Heart left ventricle (tissue), 16 donors: ENCODE measurements at regions of chr21 and their contacts with region 1.

Region 1: GRCh38 chr21:37009740-37010341 is 3.3 kb downstream of the RIPPLY3 start:
- DNase-seq: peak; percentile 77 to 92 (median 80)
- ATAC-seq: peak; percentile 85 to 99 (median 95)
- H3K4me3 ChIP-seq: peak overlapping the region in 7 of 12 donors; percentile 13 to 46 (median 21)
- H3K27ac ChIP-seq: no peak overlapping the region
- H3K4me1 ChIP-seq: peaks cover 0 to 19% (median 10%) of the 10 kb centered on the region in 12 donors
- H3K27me3 ChIP-seq: peaks cover 14 to 90% (median 44%) of the 10 kb centered on the region in 9 donors
- CTCF ChIP-seq: peak; percentile 67 to 89 (median 82)
- POLR2A ChIP-seq: no peak

Region 2: DNA sequence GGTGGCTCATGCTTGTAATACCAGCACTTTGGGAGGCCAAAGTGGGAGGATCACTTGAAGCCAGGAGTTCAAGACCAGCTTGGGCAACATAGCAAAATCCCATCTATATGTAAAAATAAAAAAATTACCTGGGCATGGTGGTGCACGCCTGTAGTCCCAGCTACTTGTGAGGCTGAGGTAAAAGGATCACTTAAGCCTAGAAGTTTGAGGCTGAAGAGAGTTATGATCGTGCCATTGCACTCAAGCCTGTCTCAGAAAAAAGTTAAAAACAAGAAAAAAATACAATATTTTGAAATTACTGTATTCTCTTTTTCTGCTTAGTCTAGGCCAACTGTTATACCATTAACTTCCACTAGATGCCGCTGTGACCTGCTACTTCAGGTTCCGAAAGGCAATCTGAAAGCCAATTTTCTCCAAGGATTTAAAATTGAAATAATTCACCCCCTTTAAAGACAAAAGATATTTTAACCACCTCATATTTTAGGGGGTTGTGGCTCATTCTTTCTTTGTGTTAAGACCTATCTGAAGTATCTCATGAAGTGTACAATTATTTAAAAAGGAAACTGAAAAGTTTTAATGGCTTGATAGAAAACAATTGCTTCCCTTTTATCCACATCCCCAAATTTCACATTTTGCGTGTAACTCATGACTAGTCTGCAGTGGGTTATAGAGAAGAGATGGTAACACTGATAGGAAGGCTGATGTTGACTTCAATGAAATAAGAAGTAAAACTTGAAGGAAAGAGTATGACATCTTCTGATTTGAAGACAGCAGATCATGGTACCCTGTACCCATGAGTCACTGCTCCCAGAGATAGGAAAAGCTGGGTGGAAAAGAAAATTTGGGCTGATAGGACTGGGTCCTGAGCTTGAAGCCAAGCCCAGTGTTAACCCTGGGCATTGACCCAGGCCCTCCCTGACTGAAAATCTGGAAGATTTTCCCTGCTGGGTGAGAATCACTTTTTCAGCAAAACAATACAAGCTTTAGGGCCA is 505.5 kb before region 1 on chr21:
- intact Hi-C with region 1: loop called in 1 of 10 experiments (anchors 10 kb)
- DNase-seq: peak in 1 of 5 donors; percentile 21
- ATAC-seq: no peak
- H3K4me3 ChIP-seq: no peak overlapping the region
- H3K27ac ChIP-seq: no peak overlapping the region
- H3K4me1 ChIP-seq: peaks cover 0 to 8% (median 0%) of the 10 kb centered on the region in 12 donors
- H3K27me3 ChIP-seq: peaks cover 0 to 8% (median 0%) of the 10 kb centered on the region in 9 donors
- CTCF ChIP-seq: peak; percentile 90 to 97 (median 92)
- POLR2A ChIP-seq: no peak

Region 3: DNA sequence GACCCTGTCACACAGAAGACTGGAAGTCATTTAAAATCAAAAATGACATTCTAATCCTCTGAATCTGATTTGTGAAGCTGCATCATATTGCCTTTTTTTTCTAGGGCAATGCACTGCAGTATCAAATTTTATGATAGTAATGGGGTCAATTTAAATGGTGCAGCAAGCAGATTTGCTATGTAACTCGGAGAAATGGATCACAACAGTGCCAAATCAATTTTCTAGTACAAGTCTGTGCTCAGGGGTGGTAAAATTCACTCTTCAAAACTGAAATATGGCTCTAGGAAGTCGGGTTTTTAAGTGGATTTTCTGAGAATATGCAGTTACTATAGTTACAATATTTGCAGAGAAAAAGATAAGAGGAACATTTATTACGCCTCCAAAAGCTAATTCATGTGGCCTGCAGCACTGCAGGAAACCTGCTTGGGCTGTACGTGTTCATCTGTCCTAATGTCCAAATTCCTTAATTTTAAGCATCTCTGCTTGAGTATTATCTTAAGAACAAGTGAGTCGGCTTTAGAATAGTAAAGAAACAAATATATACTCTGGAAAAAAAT is 74.9 kb before region 1 on chr21:
- intact Hi-C with region 1: loop called in 1 of 10 experiments (anchors 5 kb)
- DNase-seq: no peak
- ATAC-seq: no peak
- H3K4me3 ChIP-seq: no peak overlapping the region
- H3K27ac ChIP-seq: no peak overlapping the region
- H3K4me1 ChIP-seq: peaks cover 0 to 18% (median 0%) of the 10 kb centered on the region in 12 donors
- H3K27me3 ChIP-seq: no peaks in the 10 kb centered on the region
- CTCF ChIP-seq: no peak
- POLR2A ChIP-seq: no peak

Region 4: DNA sequence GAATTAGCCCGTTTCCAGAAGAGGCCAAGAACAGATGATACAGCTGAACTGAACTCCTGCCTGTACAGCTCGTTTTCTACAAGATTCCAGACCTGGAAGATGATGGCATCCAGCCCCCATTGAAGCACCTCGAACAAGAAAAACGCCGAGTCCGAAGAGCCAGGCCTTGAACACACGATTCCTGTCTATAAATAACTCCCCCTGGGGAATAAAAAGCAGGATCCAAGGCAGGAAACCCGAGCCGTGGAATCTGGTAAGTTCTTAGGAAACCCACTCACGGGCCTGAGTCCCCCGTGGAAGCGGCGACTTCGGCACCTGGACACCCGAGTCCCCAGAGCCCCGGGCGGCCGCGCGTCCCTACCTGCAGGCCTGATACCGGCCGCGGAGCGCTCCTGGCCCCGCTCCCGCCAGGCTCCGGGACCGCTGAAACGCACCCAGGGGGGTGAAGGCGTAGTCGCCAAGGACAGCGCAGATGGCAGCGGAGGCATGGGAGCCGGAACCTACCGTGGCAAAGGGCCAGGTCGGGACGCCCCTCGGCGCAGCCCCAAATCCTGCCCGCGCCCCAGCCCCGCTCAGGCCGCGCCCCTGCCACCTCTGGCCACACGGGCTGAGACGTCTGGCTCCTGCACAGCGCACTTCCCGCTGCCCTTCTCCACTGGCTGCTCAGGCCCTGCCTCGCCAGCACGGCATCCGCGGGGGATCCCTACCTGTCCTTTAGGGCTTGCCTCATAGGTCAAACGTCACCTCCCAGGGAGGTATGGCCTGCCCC is 29.4 kb before region 1 on chr21:
- intact Hi-C with region 1: loop called in 1 of 10 experiments (anchors 2 kb)
- DNase-seq: peak in 4 of 5 donors; percentile 20 to 69 (median 37)
- ATAC-seq: peak; percentile 54 to 85 (median 79)
- H3K4me3 ChIP-seq: peak overlapping the region; percentile 32 to 70 (median 57)
- H3K27ac ChIP-seq: peak overlapping the region in 5 of 12 donors; percentile 31 to 46 (median 34)
- H3K4me1 ChIP-seq: peaks cover 0 to 24% (median 10%) of the 10 kb centered on the region in 12 donors
- H3K27me3 ChIP-seq: no peaks in the 10 kb centered on the region
- CTCF ChIP-seq: peak in 1 of 12 donors; percentile 5
- POLR2A ChIP-seq: no peak